ENCODE measurements at regions of chr16 and their contacts with region 1.

Region 1: DNA sequence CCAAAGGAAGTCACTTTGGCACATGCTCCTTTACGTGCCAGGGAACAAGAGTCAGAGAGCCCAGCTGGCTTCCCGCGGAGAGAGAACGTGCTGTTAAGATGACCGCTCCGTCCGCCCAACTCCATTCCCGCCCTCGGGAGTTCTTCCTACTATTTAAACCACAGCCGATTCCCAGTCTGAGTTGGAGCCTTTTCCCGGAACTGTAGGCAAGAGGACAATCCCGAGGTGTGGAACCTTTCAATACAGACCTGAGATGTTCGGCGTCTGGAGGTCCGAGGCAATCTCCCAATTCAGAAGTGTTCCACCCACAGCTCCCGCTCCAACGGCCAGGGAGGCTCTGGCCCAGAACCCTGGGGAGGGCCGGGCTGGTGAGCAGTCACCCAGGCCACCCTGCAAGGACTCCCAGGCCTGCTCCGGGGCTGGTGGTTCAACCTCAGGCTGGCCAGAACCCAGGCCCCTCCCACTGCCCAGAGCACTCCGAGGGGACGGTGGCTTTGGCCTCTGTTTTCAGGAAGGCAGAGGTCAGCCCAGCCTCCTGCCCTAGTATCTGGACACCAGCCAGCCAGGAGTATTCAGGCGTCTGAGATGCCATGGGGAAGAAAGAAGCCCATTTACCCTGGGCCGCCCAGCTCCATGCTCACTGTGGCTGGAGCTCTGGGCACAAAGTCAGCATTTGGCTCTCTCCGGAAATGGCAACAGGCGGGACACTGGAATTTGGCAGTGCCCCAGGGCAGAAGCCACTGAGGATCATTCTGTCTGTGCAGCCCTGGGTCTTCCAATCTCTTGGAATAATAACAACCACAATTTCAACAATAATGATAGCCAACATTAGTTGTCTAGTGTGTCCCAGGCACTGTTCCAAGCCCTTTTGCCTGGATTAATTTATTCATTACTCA is 21.4 kb downstream of the EMP2 start:
- DNase-seq: peak; percentile 86 to 95
- H3K4me3 ChIP-seq: peak overlapping the region; percentile 52
- H3K27ac ChIP-seq: peak overlapping the region; percentile 78
- H3K4me1 ChIP-seq: peaks cover 37% of the 10 kb centered on the region
- H3K27me3 ChIP-seq: no peaks in the 10 kb centered on the region
- CTCF ChIP-seq: no peak

Region 2: DNA sequence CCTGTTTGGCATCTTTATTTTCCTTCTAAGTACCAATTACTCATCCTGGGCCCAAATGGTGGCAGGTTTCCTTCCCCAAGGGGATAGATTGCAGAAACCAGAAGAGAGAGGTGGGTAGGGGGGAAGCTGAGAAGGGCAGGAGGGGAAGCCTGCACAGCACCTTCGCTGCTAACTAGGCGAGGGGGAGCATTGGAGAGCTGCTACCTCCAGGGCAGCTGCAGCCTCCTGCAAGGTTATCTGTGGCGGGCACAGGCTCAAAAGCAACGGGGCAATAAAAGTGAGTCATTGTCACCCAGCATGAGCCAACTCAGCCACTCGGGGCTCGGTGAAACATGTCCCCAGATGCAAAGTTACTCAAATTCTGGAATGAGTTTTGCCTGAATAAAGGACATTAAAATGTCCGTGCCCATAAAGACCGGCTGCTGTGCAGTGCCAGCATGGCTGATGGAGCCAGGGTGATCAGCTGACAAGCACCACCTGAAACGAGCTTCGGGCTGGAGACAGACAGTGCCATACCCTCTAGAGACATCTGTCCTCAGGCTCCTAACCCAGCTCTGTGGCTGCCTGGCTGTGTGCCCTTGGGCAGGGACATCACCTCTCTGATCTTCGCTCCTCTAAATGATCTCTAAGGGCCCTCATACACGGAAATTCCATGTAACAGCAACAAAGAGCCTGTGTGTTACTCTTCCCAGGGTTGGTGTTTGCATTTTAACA is 308.7 kb before region 1 on chr16:
- CTCF ChIA-PET with region 1: no interaction called
- POLR2A ChIA-PET with region 1: no interaction called
- intact Hi-C with region 1: no loop called
- DNase-seq: no peak
- H3K4me3 ChIP-seq: no peak overlapping the region
- H3K27ac ChIP-seq: no peak overlapping the region
- H3K4me1 ChIP-seq: no peaks in the 10 kb centered on the region
- H3K27me3 ChIP-seq: peaks cover 43% of the 10 kb centered on the region
- CTCF ChIP-seq: no peak

Region 3: GRCh38 chr16:10539244-10539643 is 19.8 kb before region 1 on chr16:
- CTCF ChIA-PET with region 1: no interaction called
- POLR2A ChIA-PET with region 1: no interaction called
- intact Hi-C with region 1: loop called (anchors 1 kb)
- DNase-seq: peak; percentile 80 to 96
- H3K4me3 ChIP-seq: no peak overlapping the region; the same call in 1 of the 2 replicates
- H3K27ac ChIP-seq: peak overlapping the region; percentile 92
- H3K4me1 ChIP-seq: peaks cover 65% of the 10 kb centered on the region
- H3K27me3 ChIP-seq: no peaks in the 10 kb centered on the region
- CTCF ChIP-seq: no peak